Heart left ventricle (tissue), 16 donors: ENCODE measurements at regions of chr11 and their contacts with region 1.

Region 1: GRCh38 chr11:33257897-33258630 is 883 bp downstream of the HIPK3 start:
- DNase-seq: peak; percentile 91 to 95 (median 92)
- ATAC-seq: peak; percentile 60 to 89 (median 86)
- H3K4me3 ChIP-seq: peak overlapping the region; percentile 78 to 95 (median 94)
- H3K27ac ChIP-seq: peak overlapping the region; percentile 99 to 100 (median 100)
- H3K4me1 ChIP-seq: peaks cover 4 to 52% (median 33%) of the 10 kb centered on the region in 12 donors
- H3K27me3 ChIP-seq: no peaks in the 10 kb centered on the region
- CTCF ChIP-seq: peak in 11 of 12 donors; percentile 5 to 56 (median 34)
- POLR2A ChIP-seq: peak in 1 of 2 donors; percentile 71

Region 2: DNA sequence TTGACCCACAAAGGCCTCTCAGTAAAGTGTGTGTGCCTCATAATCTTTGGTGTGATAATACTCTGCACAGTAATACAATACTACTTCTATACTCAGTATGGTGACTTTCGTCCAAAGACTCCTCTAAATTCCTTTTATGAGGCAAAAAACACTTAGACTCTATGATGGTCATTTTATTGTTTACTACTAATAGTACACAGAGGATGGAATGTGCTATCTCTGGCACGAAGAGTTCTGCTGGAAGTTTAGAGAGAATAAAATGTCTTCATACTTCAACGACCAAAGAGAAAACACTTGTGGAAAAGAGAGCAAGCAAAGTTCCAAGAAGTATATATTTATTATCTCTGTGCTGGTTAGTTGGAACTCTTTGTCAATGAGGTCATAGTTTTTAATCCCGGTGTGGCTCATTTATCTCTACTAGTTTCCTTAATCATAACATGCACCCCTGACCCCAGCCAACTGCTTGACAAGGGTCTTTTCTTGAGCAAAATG is 89.3 kb before region 1 on chr11:
- intact Hi-C with region 1: loop called in 9 of 10 experiments (anchors 2 to 5 kb)
- DNase-seq: no peak
- ATAC-seq: peak in 3 of 4 donors; percentile 28 to 52 (median 29)
- H3K4me3 ChIP-seq: no peak overlapping the region
- H3K27ac ChIP-seq: peak overlapping the region in 1 of 12 donors; percentile 33
- H3K4me1 ChIP-seq: peaks cover 0 to 20% (median 5%) of the 10 kb centered on the region in 12 donors
- H3K27me3 ChIP-seq: no peaks in the 10 kb centered on the region
- CTCF ChIP-seq: no peak
- POLR2A ChIP-seq: no peak

Region 3: DNA sequence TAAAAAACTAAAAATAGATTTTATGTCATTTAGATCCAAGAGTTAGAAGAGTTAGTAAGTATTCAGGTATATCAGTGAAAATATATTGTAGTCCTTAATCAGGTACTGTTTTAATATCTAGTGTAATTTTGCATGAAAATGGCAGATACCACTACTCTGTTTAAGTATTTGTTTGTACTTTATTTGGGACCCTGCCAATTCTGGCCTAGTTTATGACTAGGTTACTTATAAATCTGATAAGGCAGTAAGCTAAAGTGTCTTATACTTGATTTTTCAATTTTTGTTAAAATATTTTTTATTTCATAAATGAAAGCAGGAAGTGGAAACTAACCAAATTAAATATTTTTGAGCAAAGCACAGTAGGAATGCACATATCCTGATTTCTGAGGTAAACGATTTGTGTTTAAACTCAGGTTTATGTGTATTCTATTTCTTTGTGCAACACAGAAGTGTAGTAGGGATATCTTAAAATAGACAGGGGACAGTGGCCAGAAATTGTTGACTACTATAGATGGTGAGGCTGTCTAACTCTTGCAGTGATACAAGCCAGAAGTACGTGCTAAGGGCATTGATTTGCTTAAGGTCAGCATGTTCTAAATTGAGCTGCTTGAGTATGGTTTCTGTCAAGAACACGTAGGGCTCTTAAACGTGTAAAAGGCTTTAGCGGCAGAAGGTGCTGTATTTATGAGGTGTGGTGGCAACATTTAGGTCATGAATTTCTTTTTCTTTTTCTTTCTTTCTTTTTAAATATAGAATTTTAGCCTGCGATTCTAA is 33.1 kb after region 1 on chr11:
- intact Hi-C with region 1: loop called in 5 of 10 experiments (anchors 2 to 5 kb)
- DNase-seq: peak in 2 of 5 donors; percentile 33 to 55
- ATAC-seq: peak; percentile 90 to 96 (median 94)
- H3K4me3 ChIP-seq: peak overlapping the region in 10 of 12 donors; percentile 6 to 25 (median 17)
- H3K27ac ChIP-seq: peak overlapping the region; percentile 70 to 91 (median 82)
- H3K4me1 ChIP-seq: peaks cover 7 to 80% (median 52%) of the 10 kb centered on the region in 12 donors
- H3K27me3 ChIP-seq: no peaks in the 10 kb centered on the region
- CTCF ChIP-seq: no peak
- POLR2A ChIP-seq: no peak

Region 4: DNA sequence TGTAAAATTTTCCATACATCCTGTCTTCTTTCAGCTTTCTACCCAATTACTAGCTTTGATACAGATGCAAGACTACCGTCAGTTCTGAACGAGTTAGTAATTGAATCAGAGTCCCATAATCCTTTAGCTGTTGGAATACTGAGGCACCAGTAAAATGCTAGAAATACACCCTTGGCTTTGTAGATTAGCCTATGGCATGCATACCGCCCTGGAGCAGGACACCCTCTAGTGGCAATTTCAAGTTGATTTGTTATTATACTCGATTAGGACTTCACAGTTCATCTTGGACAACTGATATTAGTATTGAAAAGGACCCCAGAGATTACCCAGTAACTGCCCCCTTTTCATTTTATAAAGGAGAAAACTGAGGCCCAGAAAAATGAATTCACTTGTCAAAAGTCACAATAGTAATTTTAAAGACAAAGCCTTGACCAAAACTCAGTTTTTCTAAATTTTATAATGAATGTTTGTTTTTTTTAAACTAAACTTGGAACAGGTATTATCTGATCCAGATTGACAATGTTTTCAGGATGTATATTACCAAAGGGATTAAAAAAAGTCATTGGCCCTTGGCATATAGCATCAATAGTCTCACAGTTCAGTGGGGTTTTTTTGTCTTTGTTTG is 71.8 kb after region 1 on chr11:
- intact Hi-C with region 1: loop called in 8 of 10 experiments (anchors 2 to 5 kb)
- DNase-seq: peak in 3 of 5 donors; percentile 33 to 46 (median 40)
- ATAC-seq: peak in 3 of 4 donors; percentile 68 to 83 (median 68)
- H3K4me3 ChIP-seq: no peak overlapping the region
- H3K27ac ChIP-seq: peak overlapping the region in 2 of 12 donors; percentile 4 to 15
- H3K4me1 ChIP-seq: peaks cover 14 to 95% (median 60%) of the 10 kb centered on the region in 12 donors
- H3K27me3 ChIP-seq: no peaks in the 10 kb centered on the region
- CTCF ChIP-seq: peak; percentile 52 to 79 (median 64)
- POLR2A ChIP-seq: no peak